GM12878 (cell line): ENCODE measurements at regions of chr6 and their contacts with region 1.

Region 1: DNA sequence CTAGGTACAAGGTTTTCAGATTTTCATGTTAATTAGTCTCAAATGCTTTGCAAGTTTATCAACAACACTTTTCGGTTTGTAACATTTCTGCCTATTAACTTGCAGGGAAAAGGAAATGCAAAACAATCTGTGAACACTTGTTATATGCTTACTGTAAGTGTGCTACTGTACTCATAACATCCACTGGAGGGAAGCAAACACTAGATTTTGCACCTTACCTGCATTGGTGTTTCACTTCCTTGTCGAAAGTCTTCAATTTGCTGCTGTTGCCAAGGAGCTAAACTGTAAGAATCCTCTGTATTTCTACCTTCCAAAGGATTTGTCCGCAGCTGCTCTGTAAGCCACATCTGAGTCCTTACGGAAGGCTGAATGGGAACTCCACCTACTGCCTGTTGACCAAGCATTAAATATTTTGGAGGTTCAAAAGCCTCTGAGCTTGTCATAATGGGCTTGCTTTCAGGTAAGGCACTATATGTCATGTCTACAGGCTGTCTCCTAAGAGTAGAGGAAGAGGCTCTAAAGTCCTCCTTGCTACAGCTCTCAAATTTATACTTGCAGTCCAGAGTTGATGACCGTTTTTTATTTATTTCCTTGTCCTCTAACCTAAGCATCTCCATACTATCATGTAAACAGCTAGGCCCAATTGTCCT is 17.3 kb downstream of the PLN start:
- DNase-seq: peak; percentile 65
- ATAC-seq: peak; percentile 100
- H3K4me3 ChIP-seq: no peak overlapping the region
- H3K27ac ChIP-seq: no peak overlapping the region
- H3K4me1 ChIP-seq: peaks cover 2% of the 10 kb centered on the region; the same call in 1 of the 2 replicates
- H3K27me3 ChIP-seq: no peaks in the 10 kb centered on the region
- CTCF ChIP-seq: peak; percentile 68 to 91 (median 80)
- EP300 ChIP-seq: no peak
- POLR2A ChIP-seq: no peak
- RAD21 ChIP-seq: peak; percentile 95

Region 2: DNA sequence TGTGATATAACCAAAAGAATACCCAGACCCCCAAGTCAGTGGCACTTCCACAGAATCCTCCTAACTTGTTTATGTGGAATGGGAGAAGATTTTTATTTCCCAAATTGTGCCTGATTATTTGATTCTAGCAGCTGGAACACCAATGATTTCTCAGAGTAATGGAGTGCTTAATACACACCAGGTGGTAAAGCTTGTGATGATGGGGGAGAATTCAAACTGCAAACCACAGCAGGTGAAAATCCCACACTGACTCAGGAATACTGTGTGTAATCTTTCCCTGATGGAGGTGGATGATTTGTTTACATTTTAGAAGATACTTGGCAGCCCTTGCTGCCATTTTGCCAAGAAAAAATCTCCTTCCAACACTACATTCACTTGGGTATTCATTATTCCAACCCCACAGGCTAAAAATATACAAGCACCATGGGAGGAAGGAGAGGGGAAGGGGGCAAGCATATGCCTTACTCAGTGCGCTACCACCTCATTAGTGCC is 230.1 kb before region 1 on chr6:
- CTCF ChIA-PET with region 1: no interaction called
- POLR2A ChIA-PET with region 1: no interaction called
- RAD21 ChIA-PET with region 1: no interaction called
- SMC1A ChIA-PET with region 1: no interaction called
- in situ Hi-C with region 1: no loop called
- intact Hi-C with region 1: no loop called
- DNase-seq: no peak
- ATAC-seq: no peak
- H3K4me3 ChIP-seq: no peak overlapping the region
- H3K27ac ChIP-seq: no peak overlapping the region
- H3K4me1 ChIP-seq: no peaks in the 10 kb centered on the region
- H3K27me3 ChIP-seq: no peaks in the 10 kb centered on the region
- CTCF ChIP-seq: no peak
- EP300 ChIP-seq: no peak
- POLR2A ChIP-seq: no peak
- RAD21 ChIP-seq: no peak

Region 3: GRCh38 chr6:118476551-118476950 is 88.9 kb before region 1 on chr6:
- CTCF ChIA-PET with region 1: no interaction called
- POLR2A ChIA-PET with region 1: no interaction called
- RAD21 ChIA-PET with region 1: no interaction called
- SMC1A ChIA-PET with region 1: no interaction called
- in situ Hi-C with region 1: no loop called
- intact Hi-C with region 1: no loop called
- DNase-seq: no peak
- ATAC-seq: no peak
- H3K4me3 ChIP-seq: no peak overlapping the region
- H3K27ac ChIP-seq: no peak overlapping the region
- H3K4me1 ChIP-seq: no peaks in the 10 kb centered on the region
- H3K27me3 ChIP-seq: no peaks in the 10 kb centered on the region
- CTCF ChIP-seq: no peak
- EP300 ChIP-seq: no peak
- POLR2A ChIP-seq: no peak
- RAD21 ChIP-seq: no peak

Region 4: GRCh38 chr6:118542184-118542952 is 23.1 kb before region 1 on chr6:
- CTCF ChIA-PET with region 1: interaction called, 10 read pairs
- POLR2A ChIA-PET with region 1: no interaction called
- RAD21 ChIA-PET with region 1: no interaction called
- SMC1A ChIA-PET with region 1: interaction called, 3 read pairs
- in situ Hi-C with region 1: no loop called
- intact Hi-C with region 1: no loop called
- DNase-seq: no peak
- ATAC-seq: no peak
- H3K4me3 ChIP-seq: no peak overlapping the region
- H3K27ac ChIP-seq: no peak overlapping the region
- H3K4me1 ChIP-seq: no peaks in the 10 kb centered on the region
- H3K27me3 ChIP-seq: no peaks in the 10 kb centered on the region
- CTCF ChIP-seq: no peak
- EP300 ChIP-seq: no peak
- POLR2A ChIP-seq: no peak
- RAD21 ChIP-seq: no peak

Region 5: DNA sequence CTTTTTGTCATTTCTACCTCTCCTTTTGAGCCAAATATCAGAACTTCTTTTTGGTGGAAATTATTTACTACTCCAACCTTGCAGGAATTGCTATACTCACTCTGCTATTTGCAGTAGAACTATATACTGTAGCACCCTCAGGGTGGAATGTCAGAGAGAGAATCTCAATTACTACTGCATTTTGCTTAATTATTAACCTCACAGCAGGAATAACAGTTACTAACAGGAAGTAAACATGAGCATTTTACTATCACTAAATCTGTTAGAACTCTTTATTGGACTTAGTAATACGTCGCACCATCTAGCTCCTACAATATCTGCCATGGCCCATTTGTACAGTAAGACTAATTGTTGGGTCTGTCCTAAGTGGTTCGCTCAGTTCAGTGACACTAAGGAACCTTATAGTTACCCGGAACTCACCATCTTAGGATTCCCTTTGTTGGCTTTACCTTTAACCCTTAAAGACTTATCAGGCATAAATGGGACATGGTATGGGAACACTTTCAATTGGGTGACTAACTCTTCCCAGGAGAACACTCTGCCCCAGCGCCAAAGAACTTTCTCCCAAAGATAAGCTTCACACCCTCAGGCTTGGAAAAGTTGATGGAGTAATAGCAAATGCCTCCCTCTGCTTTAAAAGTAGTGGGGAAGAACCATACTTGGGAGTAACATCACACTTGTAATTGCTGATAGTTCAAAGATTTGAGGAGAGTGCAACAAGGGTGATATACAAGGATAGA is 21.5 kb after region 1 on chr6:
- CTCF ChIA-PET with region 1: interaction called, 17 read pairs
- POLR2A ChIA-PET with region 1: no interaction called
- RAD21 ChIA-PET with region 1: interaction called, 6 read pairs
- SMC1A ChIA-PET with region 1: interaction called, 4 read pairs
- in situ Hi-C with region 1: no loop called
- intact Hi-C with region 1: no loop called
- DNase-seq: no peak
- ATAC-seq: no peak
- H3K4me3 ChIP-seq: no peak overlapping the region
- H3K27ac ChIP-seq: no peak overlapping the region
- H3K4me1 ChIP-seq: no peaks in the 10 kb centered on the region
- H3K27me3 ChIP-seq: no peaks in the 10 kb centered on the region
- CTCF ChIP-seq: no peak
- EP300 ChIP-seq: no peak
- POLR2A ChIP-seq: no peak
- RAD21 ChIP-seq: no peak

Region 6: GRCh38 chr6:118635909-118636735 is 70.7 kb after region 1 on chr6:
- CTCF ChIA-PET with region 1: interaction called, 10 read pairs
- POLR2A ChIA-PET with region 1: no interaction called
- RAD21 ChIA-PET with region 1: no interaction called
- SMC1A ChIA-PET with region 1: interaction called, 6 read pairs
- in situ Hi-C with region 1: no loop called
- intact Hi-C with region 1: no loop called
- DNase-seq: no peak
- ATAC-seq: no peak
- H3K4me3 ChIP-seq: no peak overlapping the region
- H3K27ac ChIP-seq: no peak overlapping the region
- H3K4me1 ChIP-seq: peaks cover 5% of the 10 kb centered on the region; the same call in 1 of the 2 replicates
- H3K27me3 ChIP-seq: no peaks in the 10 kb centered on the region
- CTCF ChIP-seq: no peak
- EP300 ChIP-seq: no peak
- POLR2A ChIP-seq: no peak
- RAD21 ChIP-seq: no peak

Region 7: GRCh38 chr6:118776607-118777549 is 211.4 kb after region 1 on chr6:
- CTCF ChIA-PET with region 1: interaction called, 38 read pairs
- POLR2A ChIA-PET with region 1: no interaction called
- RAD21 ChIA-PET with region 1: interaction called, 17 read pairs
- SMC1A ChIA-PET with region 1: interaction called, 29 read pairs
- in situ Hi-C with region 1: loop called (anchors 10 kb)
- intact Hi-C with region 1: loop called (anchors 1 kb)
- DNase-seq: peak; percentile 20
- ATAC-seq: peak; percentile 95
- H3K4me3 ChIP-seq: no peak overlapping the region
- H3K27ac ChIP-seq: no peak overlapping the region
- H3K4me1 ChIP-seq: peaks cover 3% of the 10 kb centered on the region; the same call in 1 of the 2 replicates
- H3K27me3 ChIP-seq: peaks cover 0 to 2% of the 10 kb centered on the region in 2 experiments; a peak in 1 of 4 replicates
- CTCF ChIP-seq: peak; percentile 70 to 74 (median 71)
- EP300 ChIP-seq: no peak
- POLR2A ChIP-seq: no peak
- RAD21 ChIP-seq: peak; percentile 77

Region 8: DNA sequence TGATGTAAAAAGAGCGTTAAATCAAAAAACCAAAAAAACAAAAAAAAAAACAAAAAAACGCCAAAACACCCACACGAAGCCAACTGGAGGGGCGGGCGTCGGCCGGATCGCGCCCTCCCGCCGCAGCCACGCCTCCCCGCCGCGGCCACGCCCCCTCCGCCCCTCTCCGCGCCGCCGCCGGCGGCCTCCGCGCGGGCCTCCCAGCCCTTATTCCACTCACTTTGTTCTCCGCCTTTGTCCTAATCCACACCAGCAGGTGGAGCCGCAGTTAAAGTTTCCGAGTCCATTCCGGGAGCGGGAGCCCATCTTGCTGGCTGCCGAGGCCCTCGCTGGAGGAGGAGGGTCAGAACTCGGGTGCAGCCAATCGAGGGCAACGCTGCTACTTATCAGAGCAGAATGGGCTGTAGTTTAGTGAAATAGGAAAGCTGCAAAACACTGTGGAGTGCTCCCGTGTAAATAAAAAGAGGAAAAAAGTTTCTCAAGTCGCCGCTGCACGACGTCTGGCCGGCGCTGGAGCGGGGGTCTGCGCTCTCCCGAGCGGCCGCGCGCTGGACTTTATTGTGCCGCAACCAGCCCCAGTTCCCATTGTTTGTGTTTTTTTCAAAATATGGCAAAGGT is 328.5 kb after region 1 on chr6 and contains the start of gene ASF1A:
- CTCF ChIA-PET with region 1: interaction called, 10 read pairs
- POLR2A ChIA-PET with region 1: no interaction called
- RAD21 ChIA-PET with region 1: interaction called, 11 read pairs
- SMC1A ChIA-PET with region 1: interaction called, 11 read pairs
- in situ Hi-C with region 1: no loop called
- intact Hi-C with region 1: loop called (anchors 10 kb)
- DNase-seq: peak; percentile 87
- ATAC-seq: peak; percentile 76
- H3K4me3 ChIP-seq: peak within 1 kb of the TSS; percentile 79
- H3K27ac ChIP-seq: peak within 1 kb of the TSS; percentile 90
- H3K4me1 ChIP-seq: peaks cover 11% of the 10 kb centered on the region
- H3K27me3 ChIP-seq: no peaks in the 10 kb centered on the region
- CTCF ChIP-seq: peak; percentile 52 to 83 (median 57)
- EP300 ChIP-seq: no peak
- POLR2A ChIP-seq: peak; percentile 70
- RAD21 ChIP-seq: peak; percentile 63; the same call in 1 of the 2 replicates
- polyA plus RNA-seq, gene ASF1A: 25.3 to 26.0 TPM